Right lobe of liver (tissue), 6 donors: ENCODE measurements at regions of chr22 and their contacts with region 1.

Region 1: GRCh38 chr22:30445438-30446145 is 20.0 kb downstream of the MTFP1 start:
- DNase-seq: no peak
- ATAC-seq: peak in 3 of 4 donors; percentile 39 to 67 (median 51)
- H3K4me3 ChIP-seq: no peak overlapping the region
- H3K27ac ChIP-seq: no peak overlapping the region
- H3K4me1 ChIP-seq: peaks cover 0 to 12% (median 0%) of the 10 kb centered on the region in 4 donors
- H3K27me3 ChIP-seq: no peaks in the 10 kb centered on the region
- CTCF ChIP-seq: no peak
- POLR2A ChIP-seq: no peak

Region 2: GRCh38 chr22:30326706-30327362 is 118.8 kb before region 1 on chr22 and contains the start of gene TBC1D10A:
- intact Hi-C with region 1: no loop called
- DNase-seq: peak; percentile 94 to 95 (median 95)
- ATAC-seq: peak; percentile 90 to 94 (median 92)
- H3K4me3 ChIP-seq: peak within 1 kb of the TSS; percentile 88 to 97 (median 95)
- H3K27ac ChIP-seq: peak within 1 kb of the TSS; percentile 59 to 78 (median 63)
- H3K4me1 ChIP-seq: peaks cover 0 to 46% (median 17%) of the 10 kb centered on the region in 4 donors
- H3K27me3 ChIP-seq: no peaks in the 10 kb centered on the region
- CTCF ChIP-seq: no peak
- POLR2A ChIP-seq: peak; percentile 86
- total RNA-seq, gene TBC1D10A: 6.6 to 12.6 (median 10.0) TPM

Region 3: GRCh38 chr22:30340911-30341685 is 104.5 kb before region 1 on chr22:
- intact Hi-C with region 1: no loop called
- DNase-seq: no peak
- ATAC-seq: no peak
- H3K4me3 ChIP-seq: no peak overlapping the region
- H3K27ac ChIP-seq: no peak overlapping the region
- H3K4me1 ChIP-seq: peaks cover 0 to 5% (median 0%) of the 10 kb centered on the region in 4 donors
- H3K27me3 ChIP-seq: no peaks in the 10 kb centered on the region
- CTCF ChIP-seq: no peak
- POLR2A ChIP-seq: no peak

Region 4: DNA sequence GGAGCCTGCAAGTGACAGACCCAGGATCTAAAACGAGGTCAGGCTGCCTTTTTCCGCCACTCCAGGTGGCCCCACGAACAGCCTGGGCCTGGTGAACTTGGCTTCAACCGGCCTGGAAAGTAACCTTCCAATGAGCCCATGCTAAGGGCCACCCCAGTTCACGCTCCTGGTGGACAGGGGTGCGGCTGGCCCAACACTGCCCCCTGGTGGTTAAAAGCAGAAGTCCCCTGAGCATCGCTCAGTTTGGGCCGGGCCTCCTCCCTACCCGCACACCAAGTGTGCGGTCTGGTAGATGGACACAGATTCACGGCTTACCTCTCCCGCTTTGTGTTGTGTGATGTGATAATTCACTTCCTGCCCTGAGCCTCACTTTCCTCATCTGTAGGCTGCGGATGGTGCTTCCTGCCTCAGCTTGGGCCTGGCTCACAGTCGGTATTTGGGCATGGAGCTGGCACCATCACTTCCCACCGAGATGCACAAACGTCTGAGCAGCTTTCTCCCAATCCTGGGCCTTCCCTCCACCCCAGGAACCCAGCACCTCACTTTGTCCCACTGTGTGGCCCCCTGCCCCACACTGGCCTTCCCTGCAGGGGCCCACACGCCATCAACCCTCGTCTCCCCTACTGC is 39.9 kb after region 1 on chr22:
- intact Hi-C with region 1: loop called in 1 of 2 experiments (anchors 2 kb)
- DNase-seq: peak; percentile 68 to 81 (median 81)
- ATAC-seq: peak; percentile 86 to 93 (median 88)
- H3K4me3 ChIP-seq: no peak overlapping the region
- H3K27ac ChIP-seq: peak overlapping the region in 1 of 3 donors; percentile 29
- H3K4me1 ChIP-seq: peaks cover 0 to 29% (median 5%) of the 10 kb centered on the region in 4 donors
- H3K27me3 ChIP-seq: no peaks in the 10 kb centered on the region
- CTCF ChIP-seq: peak; percentile 93 to 99 (median 99)
- POLR2A ChIP-seq: no peak

Region 5: GRCh38 chr22:30541961-30542810 is 96.6 kb after region 1 on chr22:
- intact Hi-C with region 1: no loop called
- DNase-seq: no peak
- ATAC-seq: peak; percentile 61 to 82 (median 69)
- H3K4me3 ChIP-seq: peak overlapping the region; percentile 6 to 51 (median 23)
- H3K27ac ChIP-seq: no peak overlapping the region
- H3K4me1 ChIP-seq: peaks cover 0 to 9% (median 0%) of the 10 kb centered on the region in 4 donors
- H3K27me3 ChIP-seq: no peaks in the 10 kb centered on the region
- CTCF ChIP-seq: no peak
- POLR2A ChIP-seq: no peak

Region 6: DNA sequence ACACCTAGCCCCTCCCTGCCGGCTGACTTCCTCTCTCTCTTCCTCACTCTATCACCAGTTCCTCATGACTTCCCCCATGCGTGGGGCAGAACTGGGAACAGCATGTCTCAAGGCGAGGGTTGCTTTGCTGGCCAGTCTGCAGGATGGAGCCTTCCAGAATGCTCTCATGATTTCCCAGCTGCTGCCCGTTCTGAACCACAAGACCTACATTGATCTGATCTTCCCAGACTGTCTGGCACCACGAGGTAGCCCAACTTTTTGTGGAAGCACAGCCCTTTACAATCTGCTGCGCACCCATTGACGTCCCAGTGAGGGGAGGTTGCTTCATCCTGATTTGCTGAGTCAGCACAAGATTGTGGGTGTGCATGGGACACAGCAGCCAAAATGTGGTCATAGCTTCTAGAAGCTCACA is 170.0 kb after region 1 on chr22:
- intact Hi-C with region 1: no loop called
- DNase-seq: no peak
- ATAC-seq: peak in 2 of 4 donors; percentile 24 to 37
- H3K4me3 ChIP-seq: no peak overlapping the region
- H3K27ac ChIP-seq: no peak overlapping the region
- H3K4me1 ChIP-seq: no peaks in the 10 kb centered on the region
- H3K27me3 ChIP-seq: no peaks in the 10 kb centered on the region
- CTCF ChIP-seq: no peak
- POLR2A ChIP-seq: no peak